HCT116 (cell line): ENCODE measurements at regions of chr14 and their contacts with region 1.

Region 1: GRCh38 chr14:76647697-76648298 is 113.5 kb upstream of the VASH1 start:
- DNase-seq: peak; percentile 48
- ATAC-seq: peak; percentile 88
- H3K4me3 ChIP-seq: no peak overlapping the region
- H3K27ac ChIP-seq: no peak overlapping the region
- H3K4me1 ChIP-seq: no peaks in the 10 kb centered on the region
- H3K27me3 ChIP-seq: peaks cover 5% of the 10 kb centered on the region; the same call in 1 of the 2 replicates
- CTCF ChIP-seq: peak; percentile 39 to 91 (median 86); a peak in 5 of 6 replicates
- POLR2A ChIP-seq: no peak
- RAD21 ChIP-seq: peak; percentile 72

Region 2: DNA sequence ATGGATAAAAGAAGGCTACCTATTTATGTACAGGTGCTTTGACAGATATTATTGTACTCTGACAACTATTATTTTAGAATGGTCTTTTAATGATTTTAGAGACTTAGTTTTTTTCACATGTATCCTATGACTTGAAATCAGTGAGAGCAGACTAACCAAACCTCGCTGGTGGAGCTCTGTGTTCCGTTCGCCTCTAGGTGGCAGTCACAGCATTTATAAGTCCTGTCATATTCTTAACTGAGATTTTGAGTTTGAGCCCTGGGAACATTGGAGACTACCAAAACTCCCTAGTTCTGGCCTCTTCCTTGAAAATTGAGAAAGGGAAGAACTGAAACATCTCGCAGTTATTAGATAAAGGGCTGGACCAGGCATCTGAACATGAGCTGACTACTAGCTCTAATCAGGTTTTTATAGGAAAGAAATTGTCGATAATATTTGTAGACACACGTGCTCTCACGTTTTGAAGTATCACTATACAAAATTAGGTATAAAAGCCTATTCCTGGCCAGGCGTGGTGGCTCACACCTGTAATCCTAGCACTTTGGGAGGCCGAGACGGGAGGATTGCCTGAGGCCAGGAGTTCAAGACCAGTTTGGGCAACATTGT is 938.5 kb before region 1 on chr14:
- CTCF ChIA-PET with region 1: interaction called, 5 read pairs
- POLR2A ChIA-PET with region 1: no interaction called
- RAD21 ChIA-PET with region 1: no interaction called
- intact Hi-C with region 1: loop called (anchors 1 kb)
- DNase-seq: peak; percentile 68
- ATAC-seq: peak; percentile 58
- H3K4me3 ChIP-seq: no peak overlapping the region
- H3K27ac ChIP-seq: no peak overlapping the region
- H3K4me1 ChIP-seq: peaks cover 17 to 18% of the 10 kb centered on the region in 2 experiments
- H3K27me3 ChIP-seq: no peaks in the 10 kb centered on the region
- CTCF ChIP-seq: peak; percentile 68 to 89 (median 78)
- POLR2A ChIP-seq: no peak
- RAD21 ChIP-seq: peak; percentile 76

Region 3: GRCh38 chr14:76050797-76051392 is 596.9 kb before region 1 on chr14:
- CTCF ChIA-PET with region 1: interaction called, 10 read pairs
- POLR2A ChIA-PET with region 1: no interaction called
- RAD21 ChIA-PET with region 1: interaction called in 1 of 2 experiments, 3 read pairs
- intact Hi-C with region 1: loop called (anchors 1 kb)
- DNase-seq: peak; percentile 21
- ATAC-seq: peak; percentile 68
- H3K4me3 ChIP-seq: no peak overlapping the region
- H3K27ac ChIP-seq: no peak overlapping the region
- H3K4me1 ChIP-seq: no peaks in the 10 kb centered on the region
- H3K27me3 ChIP-seq: no peaks in the 10 kb centered on the region
- CTCF ChIP-seq: peak; percentile 66 to 89 (median 77)
- POLR2A ChIP-seq: no peak
- RAD21 ChIP-seq: peak; percentile 85

Region 4: DNA sequence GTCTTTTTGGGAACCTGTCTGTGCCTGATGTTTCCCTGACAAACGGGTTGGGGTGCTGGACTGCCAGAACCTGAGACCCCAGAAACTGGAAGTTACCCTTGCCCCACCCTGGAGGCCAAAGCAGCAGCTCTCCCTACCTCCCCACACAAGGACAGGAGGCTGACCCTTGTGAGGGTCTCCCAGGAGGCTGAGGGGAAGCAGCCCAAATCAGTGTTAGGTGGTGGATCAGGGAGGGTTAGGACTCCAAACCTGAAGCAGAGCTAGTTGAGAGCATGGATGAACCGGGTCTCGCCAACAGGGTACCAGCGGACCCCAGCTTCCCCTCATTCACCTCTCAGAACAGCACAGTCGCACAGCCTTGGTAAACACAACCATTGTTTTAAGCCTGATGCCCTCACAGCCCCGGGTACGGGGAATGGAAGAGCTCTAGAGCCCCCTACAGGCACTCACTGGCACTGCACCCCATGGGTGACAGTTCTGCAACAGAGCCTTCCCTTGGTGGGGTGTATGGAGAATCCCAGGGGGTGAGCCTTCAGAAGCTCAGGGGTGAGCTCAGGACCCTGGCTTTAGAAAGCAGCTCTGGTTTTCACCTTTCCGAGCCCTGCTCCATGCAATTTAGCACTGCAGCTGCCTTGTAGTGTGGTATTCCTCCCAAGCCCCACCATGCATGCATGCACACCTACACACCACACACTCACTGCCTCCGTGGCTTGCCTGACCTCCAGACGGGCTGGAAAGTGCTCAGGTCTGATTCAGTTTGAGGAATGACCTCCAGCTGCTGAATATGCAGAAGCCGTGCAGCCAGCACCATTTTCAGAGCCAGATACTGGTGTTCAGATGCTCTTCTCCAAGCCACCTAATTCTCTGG is 260.6 kb before region 1 on chr14:
- CTCF ChIA-PET with region 1: no interaction called
- POLR2A ChIA-PET with region 1: no interaction called
- RAD21 ChIA-PET with region 1: no interaction called
- intact Hi-C with region 1: loop called (anchors 5 kb)
- DNase-seq: peak; percentile 37
- ATAC-seq: peak; percentile 99
- H3K4me3 ChIP-seq: no peak overlapping the region
- H3K27ac ChIP-seq: no peak overlapping the region
- H3K4me1 ChIP-seq: peaks cover 0 to 3% of the 10 kb centered on the region in 2 experiments; a peak in 1 of 4 replicates
- H3K27me3 ChIP-seq: peaks cover 39% of the 10 kb centered on the region
- CTCF ChIP-seq: peak; percentile 74 to 100 (median 98); a peak in 5 of 6 replicates
- POLR2A ChIP-seq: no peak
- RAD21 ChIP-seq: peak; percentile 93

Region 5: GRCh38 chr14:76514613-76515012 is 133.2 kb before region 1 on chr14:
- CTCF ChIA-PET with region 1: interaction called, 3 read pairs
- POLR2A ChIA-PET with region 1: no interaction called
- RAD21 ChIA-PET with region 1: no interaction called
- intact Hi-C with region 1: loop called (anchors 2 kb)
- DNase-seq: peak; percentile 48
- ATAC-seq: peak; percentile 90
- H3K4me3 ChIP-seq: no peak overlapping the region
- H3K27ac ChIP-seq: no peak overlapping the region
- H3K4me1 ChIP-seq: no peaks in the 10 kb centered on the region
- H3K27me3 ChIP-seq: peaks cover 28% of the 10 kb centered on the region
- CTCF ChIP-seq: peak; percentile 42 to 65 (median 61); a peak in 5 of 6 replicates
- POLR2A ChIP-seq: no peak
- RAD21 ChIP-seq: peak; percentile 52